ENCODE measurements at regions of chr19 and their contacts with region 1.

Region 1: DNA sequence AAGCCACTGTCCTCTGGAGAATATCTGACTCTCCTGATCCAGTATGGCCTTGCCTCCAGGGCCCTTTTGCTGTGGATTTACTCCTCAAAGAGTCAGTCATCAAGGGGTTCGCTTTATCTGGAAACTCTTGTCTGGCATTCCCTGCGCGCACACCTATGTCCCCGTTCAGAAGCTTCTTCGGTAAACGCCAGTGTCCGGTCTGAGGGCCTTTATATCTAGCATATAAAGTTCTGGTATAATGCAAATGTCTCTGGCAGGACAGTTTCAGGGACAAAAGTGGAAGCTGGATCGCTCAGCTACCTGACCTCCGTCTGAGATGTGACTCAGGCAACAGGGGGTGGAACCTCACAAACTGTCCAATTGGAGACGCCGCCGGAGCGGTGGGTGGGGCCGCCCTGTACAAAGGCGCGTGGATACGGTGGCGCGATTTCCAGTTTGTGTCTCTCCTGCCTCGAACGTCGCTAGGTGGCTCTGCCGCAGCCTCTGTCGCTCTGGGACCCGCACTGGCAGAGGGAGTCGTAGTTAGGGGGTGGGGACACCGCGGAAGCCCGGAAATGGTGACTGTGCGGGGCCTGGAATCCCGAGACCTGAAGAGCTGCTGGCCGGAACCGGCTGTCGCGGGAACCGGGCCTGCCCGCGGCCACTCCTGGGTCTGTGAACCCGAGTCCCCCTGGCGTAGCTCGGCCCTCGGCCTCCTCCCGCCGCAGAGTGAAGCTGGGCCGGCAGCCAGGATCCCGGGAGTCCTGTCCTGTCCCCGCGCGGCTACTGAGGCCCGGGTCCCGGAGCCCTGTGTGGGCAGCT is 10.6 kb upstream of the ZNF709 start:
- DNase-seq: peak; percentile 93 to 97 (median 96)
- ATAC-seq: peak; percentile 100
- H3K4me3 ChIP-seq: peak overlapping the region; percentile 8 to 84 (median 66)
- H3K27ac ChIP-seq: peak overlapping the region; percentile 49 to 93 (median 84)
- H3K4me1 ChIP-seq: peaks cover 0 to 13% (median 7%) of the 10 kb centered on the region in 12 donors
- H3K27me3 ChIP-seq: no peaks in the 10 kb centered on the region
- CTCF ChIP-seq: peak in 11 of 12 donors; percentile 18 to 75 (median 48)
- POLR2A ChIP-seq: peak in 1 of 2 donors; percentile 83

Region 2: GRCh38 chr19:12411893-12412292 is 83.3 kb before region 1 on chr19:
- intact Hi-C with region 1: no loop called
- DNase-seq: no peak
- ATAC-seq: no peak
- H3K4me3 ChIP-seq: no peak overlapping the region
- H3K27ac ChIP-seq: no peak overlapping the region
- H3K4me1 ChIP-seq: no peaks in the 10 kb centered on the region
- H3K27me3 ChIP-seq: no peaks in the 10 kb centered on the region
- CTCF ChIP-seq: no peak
- POLR2A ChIP-seq: no peak

Region 3: GRCh38 chr19:12440541-12441316 is 54.5 kb before region 1 on chr19 and contains the start of gene ZNF443:
- intact Hi-C with region 1: loop called in 2 of 10 experiments (anchors 1 to 5 kb)
- DNase-seq: peak; percentile 98 to 99 (median 99)
- ATAC-seq: peak; percentile 100
- H3K4me3 ChIP-seq: peak within 1 kb of the TSS; percentile 58 to 87 (median 76)
- H3K27ac ChIP-seq: peak within 1 kb of the TSS; percentile 40 to 87 (median 76)
- H3K4me1 ChIP-seq: peaks cover 0 to 12% (median 0%) of the 10 kb centered on the region in 12 donors
- H3K27me3 ChIP-seq: no peaks in the 10 kb centered on the region
- CTCF ChIP-seq: peak in 2 of 12 donors; percentile 12 to 21
- POLR2A ChIP-seq: peak in 1 of 2 donors; percentile 59
- total RNA-seq, gene ZNF443: 1.5 to 3.6 (median 2.1) TPM

Region 4: GRCh38 chr19:12484371-12485051 is 10.7 kb before region 1 on chr19 and contains the start of gene ZNF709:
- intact Hi-C with region 1: loop called in 1 of 10 experiments (anchors 1 kb)
- DNase-seq: peak; percentile 91 to 95 (median 93)
- ATAC-seq: peak; percentile 98 to 100 (median 100)
- H3K4me3 ChIP-seq: peak within 1 kb of the TSS; percentile 80 to 99 (median 94)
- H3K27ac ChIP-seq: peak within 1 kb of the TSS; percentile 39 to 87 (median 76)
- H3K4me1 ChIP-seq: peaks cover 0 to 27% (median 13%) of the 10 kb centered on the region in 12 donors
- H3K27me3 ChIP-seq: no peaks in the 10 kb centered on the region
- CTCF ChIP-seq: no peak
- POLR2A ChIP-seq: peak in 1 of 2 donors; percentile 51
- total RNA-seq, gene ZNF709: 0.89 to 2.9 (median 1.7) TPM

Region 5: GRCh38 chr19:12544401-12544876 is 49.2 kb after region 1 on chr19:
- intact Hi-C with region 1: loop called in 4 of 10 experiments (anchors 5 to 10 kb)
- DNase-seq: no peak
- ATAC-seq: peak in 3 of 4 donors; percentile 64 to 73 (median 67)
- H3K4me3 ChIP-seq: no peak overlapping the region
- H3K27ac ChIP-seq: peak overlapping the region in 4 of 12 donors; percentile 27 to 46 (median 32)
- H3K4me1 ChIP-seq: peaks cover 0 to 46% (median 27%) of the 10 kb centered on the region in 12 donors
- H3K27me3 ChIP-seq: no peaks in the 10 kb centered on the region
- CTCF ChIP-seq: no peak
- POLR2A ChIP-seq: no peak

Measured in heart left ventricle (tissue), 16 donors.